Naive thymus-derived CD8-positive, alpha-beta T cell (primary cell): ENCODE measurements at regions of chr6 and their contacts with region 1.

Region 1: DNA sequence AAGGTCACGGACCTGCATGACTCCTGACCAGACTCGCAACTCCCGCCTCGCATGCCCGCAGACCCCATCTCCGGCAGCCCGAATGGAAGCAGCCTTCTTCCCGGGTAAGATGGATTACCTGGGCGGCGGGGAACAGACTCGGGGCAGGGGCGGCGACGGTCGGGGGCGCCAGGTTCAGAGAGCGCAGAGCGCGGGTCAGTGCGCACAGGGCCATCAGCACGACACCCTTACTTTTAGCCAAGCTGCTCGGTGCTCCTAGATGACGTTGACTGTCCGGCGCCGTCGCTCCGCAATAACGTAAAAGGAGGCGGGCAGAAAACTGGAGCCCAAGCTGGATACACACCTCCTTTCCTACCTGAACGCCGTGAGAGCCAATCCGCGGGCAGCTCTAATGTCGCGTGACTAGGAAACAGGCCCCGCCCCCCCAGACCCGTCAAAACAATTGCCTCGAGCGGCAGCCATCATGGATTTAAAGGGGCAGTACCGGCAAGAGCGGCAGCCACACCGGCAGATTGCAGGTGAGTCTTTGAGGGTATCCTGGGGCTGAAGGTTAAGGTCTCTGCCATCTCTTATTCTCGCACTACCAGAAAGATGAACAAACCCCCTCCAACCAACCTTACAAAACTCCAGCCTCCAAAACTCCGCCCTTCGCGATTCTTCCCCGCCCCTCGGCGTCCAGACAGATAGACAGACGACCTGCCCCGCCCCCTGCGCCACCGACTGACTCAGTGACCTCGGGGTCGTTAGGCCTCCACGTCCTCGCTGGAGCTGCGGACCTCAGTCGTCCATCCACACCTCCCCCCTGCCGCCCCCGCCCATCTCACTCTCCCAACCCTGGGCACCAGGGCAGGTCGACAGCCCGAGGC is at the starts of genes KLC4 and MRPL2:
- DNase-seq: peak; percentile 91 to 98 (median 96)
- ATAC-seq: peak; percentile 94 to 98
- H3K4me3 Mint-ChIP-seq: peak within 1 kb of the TSS; percentile 93 to 99 (median 95)
- H3K27ac Mint-ChIP-seq: peak within 1 kb of the TSS; percentile 96 to 100 (median 99)
- H3K4me1 Mint-ChIP-seq: peaks cover 17 to 49% (median 40%) of the 10 kb centered on the region in 4 donors
- H3K27me3 Mint-ChIP-seq: no peaks in the 10 kb centered on the region
- polyA plus RNA-seq, gene KLC4: 9.9 to 12.7 (median 10.9) TPM
- polyA plus RNA-seq, gene MRPL2: 40.7 to 69.9 (median 59.5) TPM

Region 2: DNA sequence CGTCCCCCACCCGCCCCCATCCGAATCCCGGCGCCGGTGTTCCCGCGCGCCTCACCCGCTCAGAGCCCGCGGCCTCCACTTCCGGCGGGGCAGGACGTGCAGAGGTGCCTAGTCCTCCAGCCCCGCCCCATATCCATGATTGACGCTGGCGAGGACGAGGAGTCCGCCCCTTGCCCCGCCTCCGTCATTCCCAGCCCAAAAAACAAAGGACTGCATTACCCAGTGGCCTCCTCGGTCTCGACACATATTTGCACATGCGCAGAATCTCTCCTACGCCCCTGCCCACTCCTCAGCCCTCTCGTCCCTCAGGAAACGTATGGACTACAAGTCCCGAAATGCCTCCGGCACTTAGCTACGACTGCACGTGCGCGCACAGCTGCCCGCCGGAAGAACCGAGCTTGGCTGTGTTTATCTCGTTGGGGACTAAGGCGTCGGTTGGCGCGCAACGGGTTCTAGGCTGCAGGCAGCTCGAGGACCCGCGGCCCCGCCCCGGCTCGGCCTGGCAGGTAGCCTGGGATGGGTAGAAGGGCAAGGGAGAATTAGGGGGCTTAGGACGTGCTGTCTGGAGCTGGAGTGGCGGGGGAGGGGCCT is 45.5 kb before region 1 on chr6 and contains the starts of genes KLHDC3 and MEA1:
- POLR2A ChIA-PET with region 1: interaction called, 41 read pairs
- DNase-seq: peak; percentile 93 to 100 (median 99)
- ATAC-seq: peak; percentile 92
- H3K4me3 Mint-ChIP-seq: peak within 1 kb of the TSS; percentile 89 to 97 (median 94)
- H3K27ac Mint-ChIP-seq: peak within 1 kb of the TSS; percentile 82 to 98 (median 95)
- H3K4me1 Mint-ChIP-seq: peaks cover 52 to 82% (median 68%) of the 10 kb centered on the region in 4 donors
- H3K27me3 Mint-ChIP-seq: no peaks in the 10 kb centered on the region
- polyA plus RNA-seq, gene KLHDC3: 107 to 136 (median 117) TPM
- polyA plus RNA-seq, gene MEA1: 73.4 to 90.9 (median 77.5) TPM

Region 3: DNA sequence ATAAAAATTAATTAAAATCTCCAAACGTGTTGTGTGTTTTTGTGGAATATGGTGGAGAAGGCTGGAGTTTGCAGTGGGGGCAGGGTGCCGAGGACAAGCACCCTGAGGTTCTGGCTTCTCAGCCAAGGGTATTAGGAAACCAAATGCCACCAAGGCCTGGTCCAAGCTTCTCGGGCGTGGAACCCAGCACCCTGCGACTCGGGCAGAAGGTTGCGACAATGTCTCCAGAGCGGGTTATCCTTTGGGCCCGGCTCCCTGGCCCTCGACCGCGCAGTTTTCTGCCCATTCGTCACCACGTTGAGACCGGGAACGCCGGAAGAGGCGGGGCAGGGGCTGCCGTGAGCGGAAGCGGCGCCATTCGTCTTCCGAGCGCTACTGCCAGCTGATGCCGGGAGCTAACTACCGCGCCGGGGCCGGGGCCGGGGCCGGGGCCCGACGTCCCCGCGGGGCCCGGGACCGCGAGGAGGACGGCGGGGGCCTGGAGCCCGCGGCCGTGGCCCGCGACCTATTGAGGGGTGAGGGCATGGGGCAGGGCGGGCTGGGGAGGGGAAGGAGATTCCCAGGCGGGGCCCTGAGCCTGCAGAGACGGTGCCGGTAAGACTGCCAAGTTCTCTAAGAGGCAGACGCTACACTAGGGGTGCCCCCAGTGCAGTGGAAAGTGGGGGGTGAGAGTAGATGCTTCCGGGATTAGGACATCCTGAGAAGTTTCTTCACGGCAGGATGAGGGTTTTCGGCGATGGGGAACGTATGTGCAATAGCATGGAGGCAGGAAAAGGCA is 37.9 kb before region 1 on chr6 and contains the start of gene RRP36:
- POLR2A ChIA-PET with region 1: interaction called, 41 read pairs
- DNase-seq: peak; percentile 39 to 76 (median 58)
- ATAC-seq: peak; percentile 83 to 88
- H3K4me3 Mint-ChIP-seq: peak within 1 kb of the TSS; percentile 95 to 99 (median 98)
- H3K27ac Mint-ChIP-seq: peak within 1 kb of the TSS; percentile 68 to 97 (median 93)
- H3K4me1 Mint-ChIP-seq: peaks cover 34 to 50% (median 48%) of the 10 kb centered on the region in 4 donors
- H3K27me3 Mint-ChIP-seq: no peaks in the 10 kb centered on the region
- polyA plus RNA-seq, gene RRP36: 52.7 to 74.5 (median 57.8) TPM